A549 (cell line): ENCODE measurements at regions of chr6 and their contacts with region 1.

Region 1: DNA sequence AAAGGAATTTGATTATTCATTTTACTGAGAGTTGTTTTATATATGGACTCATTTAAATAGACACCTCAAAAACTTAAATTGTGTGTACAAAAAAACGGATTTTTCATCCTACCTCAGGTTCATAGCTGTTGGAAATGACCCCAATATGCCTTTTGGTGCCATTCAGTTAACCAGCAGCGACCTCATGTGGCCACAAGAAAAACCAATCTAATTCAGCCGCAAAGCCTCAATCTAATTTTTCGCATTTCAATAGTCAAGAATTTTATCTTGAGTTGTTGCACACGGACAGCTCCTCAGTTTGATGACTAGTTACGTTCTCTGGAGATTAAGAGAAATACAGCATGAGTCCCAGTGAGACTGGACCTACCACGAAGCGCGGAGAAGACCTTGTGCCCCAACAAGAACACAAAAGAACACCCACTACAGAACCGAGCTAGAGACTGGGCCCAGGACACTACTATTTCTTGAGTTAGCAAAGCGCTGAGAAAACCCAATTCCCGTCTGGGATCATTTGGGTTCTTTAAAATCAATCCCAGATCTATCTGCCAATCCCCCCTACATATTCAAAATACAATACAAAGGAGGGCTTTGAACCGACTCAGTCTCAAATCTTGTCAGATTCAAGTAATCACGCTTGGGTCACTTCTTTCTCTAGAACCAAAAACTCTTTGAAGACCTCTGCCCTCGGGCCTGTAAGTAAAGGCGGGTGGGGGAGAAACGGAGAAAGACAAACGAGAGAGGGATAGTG is 1.1 kb downstream of the TCP11 start:
- DNase-seq: peak; percentile 18 to 67
- ATAC-seq: peak; percentile 24 to 60; a peak in 2 of 6 replicates
- H3K4me3 ChIP-seq: no peak overlapping the region
- H3K27ac ChIP-seq: no peak overlapping the region
- H3K4me1 ChIP-seq: peaks cover 4% of the 10 kb centered on the region; the same call in 2 of the 3 replicates
- CTCF ChIP-seq: peak; percentile 83
- EP300 ChIP-seq: no peak
- POLR2A ChIP-seq: no peak
- RAD21 ChIP-seq: peak; percentile 93

Region 2: DNA sequence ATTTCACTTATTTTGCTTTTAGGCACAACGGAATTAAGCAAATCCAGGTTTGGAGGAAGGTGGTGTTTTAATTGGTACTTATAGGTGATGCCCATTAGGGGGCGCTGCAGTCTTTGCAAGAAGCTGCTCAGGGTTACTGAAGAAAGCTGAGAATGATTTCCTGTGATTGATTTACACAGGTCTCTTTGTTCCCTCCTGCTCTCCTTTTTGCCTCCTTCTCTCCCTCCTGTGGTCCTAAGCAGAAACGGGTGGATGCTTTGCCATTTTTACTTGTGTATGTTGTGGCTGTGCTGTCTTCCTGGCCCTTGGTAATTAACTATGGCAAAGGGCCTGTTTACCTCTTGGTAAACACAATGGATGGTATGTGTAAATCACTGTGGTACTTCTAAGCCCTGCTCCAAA is 153.2 kb before region 1 on chr6:
- CTCF ChIA-PET with region 1: interaction called, 20 read pairs
- POLR2A ChIA-PET with region 1: no interaction called
- DNase-seq: peak; percentile 61 to 63
- ATAC-seq: peak in 1 of 2 experiments; percentile 79; a peak in 4 of 6 replicates
- H3K4me3 ChIP-seq: no peak overlapping the region
- H3K27ac ChIP-seq: no peak overlapping the region
- H3K4me1 ChIP-seq: peaks cover 4% of the 10 kb centered on the region
- CTCF ChIP-seq: peak; percentile 65
- EP300 ChIP-seq: no peak
- POLR2A ChIP-seq: no peak
- RAD21 ChIP-seq: peak; percentile 68 to 78

Region 3: DNA sequence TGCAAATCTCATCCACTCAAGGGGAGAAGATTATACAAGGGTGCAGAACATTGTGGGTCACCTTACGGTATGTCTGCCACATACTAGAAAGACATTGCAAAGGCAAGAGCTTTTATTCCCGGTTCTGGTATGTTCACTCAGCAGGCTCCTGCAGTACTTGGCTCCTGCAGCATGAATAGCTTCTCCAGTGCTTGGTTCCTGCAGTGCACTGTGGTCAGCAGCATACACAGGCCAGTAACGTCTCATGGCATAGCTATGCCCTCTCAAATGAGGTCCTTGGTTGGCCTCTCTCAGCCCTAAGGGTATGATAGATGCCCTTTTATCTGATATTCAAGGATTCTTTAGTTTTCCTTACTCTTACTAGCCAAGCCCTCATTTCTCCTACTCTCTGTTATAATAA is 11.6 kb before region 1 on chr6:
- CTCF ChIA-PET with region 1: interaction called, 21 read pairs
- POLR2A ChIA-PET with region 1: no interaction called
- DNase-seq: no peak
- ATAC-seq: no peak
- H3K4me3 ChIP-seq: no peak overlapping the region
- H3K27ac ChIP-seq: no peak overlapping the region
- H3K4me1 ChIP-seq: no peaks in the 10 kb centered on the region
- CTCF ChIP-seq: no peak
- EP300 ChIP-seq: no peak
- POLR2A ChIP-seq: no peak
- RAD21 ChIP-seq: no peak

Region 4: DNA sequence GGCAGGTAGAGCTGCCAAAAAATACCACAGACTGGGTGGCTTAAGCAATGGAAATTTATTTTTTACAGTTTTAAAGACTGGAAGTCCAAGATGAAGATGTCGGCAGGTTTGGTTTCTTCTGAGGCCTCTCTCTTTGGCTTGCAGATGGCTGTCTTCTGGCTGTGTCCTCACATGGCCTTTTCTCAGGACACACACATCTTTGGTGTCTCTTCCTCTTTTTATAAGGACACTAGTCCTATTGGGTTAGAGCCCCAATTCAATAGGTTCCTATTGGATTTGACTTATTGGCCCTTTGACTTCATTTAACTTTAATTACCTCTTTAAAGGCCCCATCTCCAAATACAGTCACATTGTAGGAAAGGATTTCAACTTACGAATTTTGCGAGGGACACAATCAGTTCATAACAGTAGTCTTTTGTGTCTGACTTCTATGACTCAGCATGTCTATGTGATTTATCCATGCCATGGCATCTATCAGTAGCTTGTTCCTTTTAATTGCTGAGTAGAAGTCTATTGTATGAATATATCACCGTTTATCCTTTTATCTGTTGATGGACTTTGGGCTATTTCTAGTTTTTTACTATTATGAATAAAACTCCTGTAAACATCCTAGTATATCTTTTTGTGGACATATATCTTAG is 12.1 kb after region 1 on chr6:
- CTCF ChIA-PET with region 1: interaction called, 19 read pairs
- POLR2A ChIA-PET with region 1: no interaction called
- DNase-seq: peak in 1 of 2 experiments; percentile 13
- ATAC-seq: no peak
- H3K4me3 ChIP-seq: no peak overlapping the region
- H3K27ac ChIP-seq: no peak overlapping the region
- H3K4me1 ChIP-seq: peaks cover 15% of the 10 kb centered on the region; the same call in 2 of the 3 replicates
- CTCF ChIP-seq: no peak
- EP300 ChIP-seq: no peak
- POLR2A ChIP-seq: no peak
- RAD21 ChIP-seq: no peak

Region 5: DNA sequence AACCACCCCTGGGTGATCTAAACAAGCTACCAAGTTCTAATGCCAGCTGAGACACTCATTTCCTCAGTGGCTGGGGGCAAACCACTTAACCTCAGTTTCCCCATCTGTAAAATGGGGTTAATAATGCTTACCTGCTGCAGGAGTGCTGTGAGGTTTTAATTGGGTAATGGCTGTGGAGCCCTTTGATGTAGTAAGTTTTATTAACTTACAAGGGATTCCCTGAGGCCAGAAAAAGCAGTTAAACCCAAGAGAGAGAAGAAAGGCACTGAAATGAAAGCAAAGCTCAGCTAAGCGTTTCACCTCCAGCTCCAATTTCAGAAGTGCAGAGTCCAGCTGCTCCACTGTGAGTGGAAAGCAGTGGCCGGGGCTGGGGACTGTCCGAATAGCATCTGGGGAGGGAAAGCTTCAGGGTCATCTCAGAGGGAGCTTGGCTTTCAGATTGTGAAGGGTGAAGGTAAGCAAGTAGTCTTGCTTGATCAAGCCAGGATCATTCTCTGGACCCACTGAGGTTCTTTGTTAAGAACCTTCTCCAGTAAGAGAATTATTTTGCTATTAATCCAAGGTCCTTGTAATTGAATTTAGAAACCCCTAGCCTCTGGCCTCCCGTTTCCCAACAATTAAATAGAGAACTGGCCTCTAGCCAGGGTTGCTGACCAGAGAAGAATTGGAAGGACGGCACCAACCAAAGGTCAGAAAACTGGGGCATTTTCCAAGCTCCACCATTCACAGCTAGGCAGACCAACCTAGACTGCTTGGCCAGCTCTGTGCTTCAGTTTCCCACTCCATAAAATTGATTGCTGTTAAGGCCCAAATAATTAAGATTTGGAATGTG is 21.9 kb after region 1 on chr6:
- CTCF ChIA-PET with region 1: interaction called, 13 read pairs
- POLR2A ChIA-PET with region 1: no interaction called
- DNase-seq: no peak
- ATAC-seq: no peak
- H3K4me3 ChIP-seq: no peak overlapping the region
- H3K27ac ChIP-seq: no peak overlapping the region
- H3K4me1 ChIP-seq: peaks cover 17% of the 10 kb centered on the region
- CTCF ChIP-seq: no peak
- EP300 ChIP-seq: no peak
- POLR2A ChIP-seq: no peak
- RAD21 ChIP-seq: no peak

Region 6: GRCh38 chr6:35202066-35202546 is 62.0 kb after region 1 on chr6:
- CTCF ChIA-PET with region 1: interaction called, 206 read pairs
- POLR2A ChIA-PET with region 1: no interaction called
- DNase-seq: no peak
- ATAC-seq: peak in 1 of 2 experiments; percentile 33; a peak in 3 of 6 replicates
- H3K4me3 ChIP-seq: no peak overlapping the region
- H3K27ac ChIP-seq: no peak overlapping the region
- H3K4me1 ChIP-seq: no peaks in the 10 kb centered on the region; the same call in 2 of the 3 replicates
- CTCF ChIP-seq: no peak
- EP300 ChIP-seq: no peak
- POLR2A ChIP-seq: no peak
- RAD21 ChIP-seq: no peak